ENCODE measurements at regions of chr15 and their contacts with region 1.

Region 1: GRCh38 chr15:57751177-57751800 is 44.8 kb downstream of the POLR2M start:
- DNase-seq: no peak
- ATAC-seq: no peak
- H3K4me3 ChIP-seq: no peak overlapping the region
- H3K27ac ChIP-seq: no peak overlapping the region
- H3K4me1 ChIP-seq: no peaks in the 10 kb centered on the region
- H3K27me3 ChIP-seq: no peaks in the 10 kb centered on the region
- CTCF ChIP-seq: peak; percentile 49

Region 2: DNA sequence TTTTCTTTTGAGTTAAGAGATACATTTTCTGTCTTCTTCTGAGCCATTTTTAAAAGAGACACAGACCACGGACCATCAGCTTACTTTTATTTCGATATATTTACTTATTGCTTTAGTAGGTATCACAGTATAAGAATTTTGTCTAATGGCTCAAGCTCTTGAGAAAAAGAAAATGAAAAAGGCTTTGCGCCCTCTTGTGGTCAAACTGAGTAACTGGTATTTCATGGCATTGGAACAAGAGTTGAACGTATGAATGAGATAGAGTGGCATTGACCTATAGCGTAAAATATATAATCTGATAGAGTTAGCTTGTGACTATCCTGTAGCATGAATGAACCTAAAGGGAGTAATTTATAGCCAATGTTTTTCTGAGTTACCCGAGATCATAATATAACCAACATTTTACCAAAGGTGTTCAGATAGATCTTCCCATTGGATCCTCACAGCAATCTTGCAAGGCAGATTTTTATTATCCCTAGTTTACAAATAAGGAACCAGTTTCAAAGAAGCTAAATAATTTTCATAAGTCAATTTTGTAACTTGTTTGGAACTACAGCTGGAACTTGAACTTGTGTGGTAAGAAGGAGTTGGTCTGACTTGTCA is 109.8 kb after region 1 on chr15:
- intact Hi-C with region 1: loop called (anchors 5 kb)
- DNase-seq: no peak
- ATAC-seq: peak; percentile 74
- H3K4me3 ChIP-seq: no peak overlapping the region
- H3K27ac ChIP-seq: no peak overlapping the region
- H3K4me1 ChIP-seq: no peaks in the 10 kb centered on the region
- H3K27me3 ChIP-seq: no peaks in the 10 kb centered on the region
- CTCF ChIP-seq: peak; percentile 90